ENCODE measurements at regions of chr9 and their contacts with region 1.

Region 1: GRCh38 chr9:112218908-112219307 is 43.8 kb upstream of the SUSD1 start:
- DNase-seq: peak; percentile 21
- H3K4me3 Mint-ChIP-seq: peak overlapping the region; percentile 25
- H3K27ac Mint-ChIP-seq: peak overlapping the region; percentile 61
- H3K4me1 Mint-ChIP-seq: peaks cover 34% of the 10 kb centered on the region
- H3K27me3 Mint-ChIP-seq: no peaks in the 10 kb centered on the region

Region 2: GRCh38 chr9:112180387-112180881 is 38.5 kb before region 1 on chr9:
- CTCF ChIA-PET with region 1: interaction called, 3 read pairs
- POLR2A ChIA-PET with region 1: interaction called, 17 read pairs
- DNase-seq: peak; percentile 75
- H3K4me3 Mint-ChIP-seq: peak overlapping the region; percentile 25
- H3K27ac Mint-ChIP-seq: peak overlapping the region; percentile 84
- H3K4me1 Mint-ChIP-seq: peaks cover 64% of the 10 kb centered on the region
- H3K27me3 Mint-ChIP-seq: peaks cover 9% of the 10 kb centered on the region

Region 3: GRCh38 chr9:112249277-112249676 is 30.4 kb after region 1 on chr9:
- CTCF ChIA-PET with region 1: no interaction called
- POLR2A ChIA-PET with region 1: no interaction called
- DNase-seq: no peak
- H3K4me3 Mint-ChIP-seq: no peak overlapping the region
- H3K27ac Mint-ChIP-seq: no peak overlapping the region
- H3K4me1 Mint-ChIP-seq: peaks cover 15% of the 10 kb centered on the region
- H3K27me3 Mint-ChIP-seq: no peaks in the 10 kb centered on the region

Measured in activated CD4-positive, alpha-beta memory T cell treated with anti-CD3 and anti-CD28 coated beads, Interleukin-2, amount 10 ng/mL, durations not matched to agents 7 days and 5 days (primary cell).